A549 (cell line): ENCODE measurements at regions of chr4 and their contacts with region 1.

Region 1: DNA sequence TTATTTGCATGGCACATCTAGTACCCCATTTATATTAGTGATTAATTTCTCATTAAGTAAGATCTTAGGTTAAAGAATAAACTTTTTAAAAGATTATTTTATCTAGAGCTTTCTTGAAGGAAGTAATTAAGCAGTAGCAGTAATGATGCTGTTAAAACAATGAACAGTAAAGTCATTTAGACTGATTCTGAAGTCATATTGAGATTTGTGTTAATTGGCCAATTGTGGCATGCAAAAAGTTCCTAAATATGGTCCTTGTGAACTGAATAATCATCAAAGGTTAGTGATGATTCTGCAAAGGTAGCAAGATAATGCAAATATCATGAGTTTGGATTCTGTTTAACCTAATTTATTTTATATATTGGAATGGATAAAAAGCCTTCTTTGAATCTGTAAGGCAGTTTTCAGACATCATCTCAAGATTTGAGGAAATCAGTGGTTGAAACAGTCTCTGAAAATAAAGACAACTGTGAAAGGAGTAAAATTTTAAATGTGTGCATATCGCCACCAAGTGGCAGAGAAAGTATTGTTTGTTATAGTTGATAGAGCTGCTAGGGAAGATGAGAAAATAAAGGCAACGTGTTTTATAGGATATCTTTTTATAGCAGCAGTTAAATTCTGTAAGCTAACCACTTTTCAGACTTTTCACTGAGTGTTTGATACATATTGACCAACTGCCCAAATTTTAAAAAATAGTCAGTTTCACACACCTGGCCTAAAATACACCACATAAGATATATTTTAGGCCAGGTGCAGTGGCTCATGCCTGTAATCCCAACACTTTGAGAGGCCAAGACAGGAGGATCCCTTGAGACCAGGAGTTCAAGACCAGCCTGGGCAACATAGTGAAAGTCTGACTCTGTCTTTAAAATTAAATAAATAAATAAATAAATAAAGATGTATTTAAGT is 79.6 kb downstream of the CCKAR start:
- DNase-seq: peak; percentile 8 to 40
- ATAC-seq: peak in 1 of 2 experiments; percentile 70; a peak in 2 of 6 replicates
- H3K4me3 ChIP-seq: no peak overlapping the region
- H3K27ac ChIP-seq: no peak overlapping the region
- H3K4me1 ChIP-seq: no peaks in the 10 kb centered on the region
- CTCF ChIP-seq: peak; percentile 63
- EP300 ChIP-seq: no peak
- POLR2A ChIP-seq: no peak
- RAD21 ChIP-seq: peak; percentile 64 to 74

Region 2: DNA sequence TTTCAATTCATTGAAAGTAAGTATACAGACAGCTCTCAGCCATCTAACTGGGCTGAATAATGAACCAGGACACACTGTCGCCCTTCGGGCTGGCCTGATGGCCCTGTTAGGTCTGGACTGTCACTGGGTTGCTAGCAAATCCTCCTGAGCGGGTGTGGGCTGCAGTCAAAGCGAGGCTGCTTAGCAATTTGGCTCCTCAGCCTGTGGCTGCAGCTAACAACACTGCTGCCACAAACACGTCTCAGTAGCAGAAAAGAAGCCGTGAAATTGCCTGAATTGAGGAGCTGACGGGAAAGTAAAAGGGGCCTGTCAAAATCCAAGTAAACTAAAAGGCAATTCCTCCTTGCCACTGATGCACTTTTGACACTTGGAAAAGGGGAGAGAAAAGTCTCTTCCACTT is 423.8 kb before region 1 on chr4:
- CTCF ChIA-PET with region 1: interaction called, 37 read pairs
- POLR2A ChIA-PET with region 1: no interaction called
- DNase-seq: no peak
- ATAC-seq: no peak
- H3K4me3 ChIP-seq: no peak overlapping the region
- H3K27ac ChIP-seq: no peak overlapping the region
- H3K4me1 ChIP-seq: no peaks in the 10 kb centered on the region
- CTCF ChIP-seq: no peak
- EP300 ChIP-seq: no peak
- POLR2A ChIP-seq: no peak
- RAD21 ChIP-seq: no peak

Region 3: GRCh38 chr4:25993395-25994185 is 417.0 kb before region 1 on chr4:
- CTCF ChIA-PET with region 1: interaction called, 37 read pairs
- POLR2A ChIA-PET with region 1: no interaction called
- DNase-seq: peak; percentile 13 to 33
- ATAC-seq: peak; percentile 68 to 82; a peak in 3 of 6 replicates
- H3K4me3 ChIP-seq: no peak overlapping the region
- H3K27ac ChIP-seq: no peak overlapping the region
- H3K4me1 ChIP-seq: no peaks in the 10 kb centered on the region
- CTCF ChIP-seq: no peak
- EP300 ChIP-seq: no peak
- POLR2A ChIP-seq: no peak
- RAD21 ChIP-seq: 0 out of 5 replicates have a peak, but pooled peaks of 1 of the 2 experiments have one; percentile 3

Region 4: GRCh38 chr4:26161030-26161824 is 249.4 kb before region 1 on chr4:
- CTCF ChIA-PET with region 1: no interaction called
- POLR2A ChIA-PET with region 1: no interaction called
- DNase-seq: no peak
- ATAC-seq: peak; percentile 43 to 56; a peak in 2 of 6 replicates
- H3K4me3 ChIP-seq: no peak overlapping the region
- H3K27ac ChIP-seq: no peak overlapping the region
- H3K4me1 ChIP-seq: no peaks in the 10 kb centered on the region
- CTCF ChIP-seq: no peak
- EP300 ChIP-seq: no peak
- POLR2A ChIP-seq: no peak
- RAD21 ChIP-seq: no peak

Region 5: DNA sequence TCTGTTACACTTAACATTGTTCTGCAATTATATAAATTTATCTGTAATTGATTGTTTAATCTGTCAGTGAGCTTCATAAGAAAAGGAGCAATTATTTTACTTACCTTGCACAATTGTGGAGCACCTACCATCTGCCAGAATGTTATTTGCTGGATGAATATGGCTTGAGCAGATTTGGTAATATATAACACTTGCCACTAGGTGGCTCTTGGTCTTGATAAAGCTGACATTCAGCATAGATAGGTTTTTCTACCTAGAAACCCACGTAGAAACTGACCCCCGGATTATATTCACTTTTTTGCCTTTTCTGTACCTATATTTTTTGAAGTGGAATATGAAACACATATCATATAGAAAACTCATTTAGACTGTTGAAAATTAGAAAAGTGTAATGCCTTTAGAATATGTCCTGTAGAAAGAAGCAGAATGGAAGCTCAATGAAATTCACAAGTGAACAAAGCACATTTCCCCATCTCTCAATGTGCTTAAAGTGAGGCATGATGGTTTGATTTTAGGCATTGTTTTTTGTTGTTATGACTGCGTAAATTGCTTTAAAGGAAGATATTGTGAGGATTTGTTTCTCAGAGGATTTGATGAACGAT is 80.4 kb before region 1 on chr4:
- CTCF ChIA-PET with region 1: interaction called, 34 read pairs
- POLR2A ChIA-PET with region 1: no interaction called
- DNase-seq: peak; percentile 28 to 55
- ATAC-seq: peak; percentile 83 to 89
- H3K4me3 ChIP-seq: no peak overlapping the region
- H3K27ac ChIP-seq: no peak overlapping the region
- H3K4me1 ChIP-seq: no peaks in the 10 kb centered on the region
- CTCF ChIP-seq: peak; percentile 59
- EP300 ChIP-seq: no peak
- POLR2A ChIP-seq: no peak
- RAD21 ChIP-seq: peak; percentile 42 to 45; a peak in 4 of 5 replicates

Region 6: GRCh38 chr4:26397086-26397485 is 13.6 kb before region 1 on chr4:
- CTCF ChIA-PET with region 1: interaction called, 10 read pairs
- POLR2A ChIA-PET with region 1: no interaction called
- DNase-seq: no peak
- ATAC-seq: no peak
- H3K4me3 ChIP-seq: no peak overlapping the region
- H3K27ac ChIP-seq: no peak overlapping the region
- H3K4me1 ChIP-seq: no peaks in the 10 kb centered on the region
- CTCF ChIP-seq: no peak
- EP300 ChIP-seq: no peak
- POLR2A ChIP-seq: no peak
- RAD21 ChIP-seq: no peak

Region 7: DNA sequence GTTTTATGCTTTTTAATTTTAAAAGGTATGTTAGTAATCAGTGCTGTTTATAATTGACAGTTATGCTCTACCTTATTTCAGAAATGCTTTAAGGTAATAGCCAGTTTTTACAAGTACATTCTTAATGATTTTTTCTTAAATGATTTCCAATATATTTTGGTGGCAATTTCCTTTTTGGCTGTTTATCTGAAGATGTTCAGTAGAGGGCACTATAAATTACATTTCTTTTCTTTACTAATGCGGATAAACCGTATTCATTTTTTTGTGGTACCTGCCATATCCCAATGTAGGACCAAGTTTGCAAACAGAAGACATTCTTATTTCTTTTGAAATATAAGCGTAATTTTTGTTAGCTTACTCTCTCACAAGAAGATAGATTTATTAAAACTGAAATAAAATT is 14.2 kb after region 1 on chr4:
- CTCF ChIA-PET with region 1: no interaction called
- POLR2A ChIA-PET with region 1: no interaction called
- DNase-seq: no peak
- ATAC-seq: no peak
- H3K4me3 ChIP-seq: no peak overlapping the region
- H3K27ac ChIP-seq: no peak overlapping the region
- H3K4me1 ChIP-seq: no peaks in the 10 kb centered on the region
- CTCF ChIP-seq: no peak
- EP300 ChIP-seq: no peak
- POLR2A ChIP-seq: no peak
- RAD21 ChIP-seq: no peak

Region 8: DNA sequence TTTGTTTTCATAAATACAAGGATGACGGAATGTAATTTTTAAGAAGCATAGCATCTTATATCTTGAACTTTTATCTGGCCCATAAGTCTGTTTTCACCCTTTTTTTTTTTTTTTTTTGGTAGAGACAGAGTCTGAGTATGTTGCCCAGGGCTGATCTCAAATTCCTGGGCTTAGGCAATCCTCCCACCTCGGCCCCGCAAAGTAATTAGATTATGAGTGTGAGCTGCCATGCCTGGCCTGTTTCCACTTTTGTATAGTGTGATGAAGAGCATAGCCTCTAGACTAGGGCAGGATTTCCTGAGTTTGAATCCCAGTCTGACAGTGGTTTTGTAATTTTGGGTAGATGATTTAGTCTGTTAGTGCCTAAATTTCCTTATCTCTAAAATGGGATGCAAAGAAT is 461.0 kb after region 1 on chr4:
- CTCF ChIA-PET with region 1: no interaction called
- POLR2A ChIA-PET with region 1: no interaction called
- DNase-seq: no peak
- ATAC-seq: no peak
- H3K4me3 ChIP-seq: no peak overlapping the region
- H3K27ac ChIP-seq: no peak overlapping the region
- H3K4me1 ChIP-seq: no peaks in the 10 kb centered on the region
- CTCF ChIP-seq: no peak
- EP300 ChIP-seq: no peak
- POLR2A ChIP-seq: no peak
- RAD21 ChIP-seq: no peak